A673 (cell line): ENCODE measurements at regions of chr6 and their contacts with region 1.

Region 1: GRCh38 chr6:53302678-53303360 is 45.9 kb downstream of the ELOVL5 start:
- DNase-seq: peak; percentile 70
- H3K4me3 ChIP-seq: peak overlapping the region; percentile 16
- H3K27ac ChIP-seq: no peak overlapping the region
- H3K4me1 ChIP-seq: peaks cover 22% of the 10 kb centered on the region
- H3K27me3 ChIP-seq: no peaks in the 10 kb centered on the region
- CTCF ChIP-seq: no peak

Region 2: DNA sequence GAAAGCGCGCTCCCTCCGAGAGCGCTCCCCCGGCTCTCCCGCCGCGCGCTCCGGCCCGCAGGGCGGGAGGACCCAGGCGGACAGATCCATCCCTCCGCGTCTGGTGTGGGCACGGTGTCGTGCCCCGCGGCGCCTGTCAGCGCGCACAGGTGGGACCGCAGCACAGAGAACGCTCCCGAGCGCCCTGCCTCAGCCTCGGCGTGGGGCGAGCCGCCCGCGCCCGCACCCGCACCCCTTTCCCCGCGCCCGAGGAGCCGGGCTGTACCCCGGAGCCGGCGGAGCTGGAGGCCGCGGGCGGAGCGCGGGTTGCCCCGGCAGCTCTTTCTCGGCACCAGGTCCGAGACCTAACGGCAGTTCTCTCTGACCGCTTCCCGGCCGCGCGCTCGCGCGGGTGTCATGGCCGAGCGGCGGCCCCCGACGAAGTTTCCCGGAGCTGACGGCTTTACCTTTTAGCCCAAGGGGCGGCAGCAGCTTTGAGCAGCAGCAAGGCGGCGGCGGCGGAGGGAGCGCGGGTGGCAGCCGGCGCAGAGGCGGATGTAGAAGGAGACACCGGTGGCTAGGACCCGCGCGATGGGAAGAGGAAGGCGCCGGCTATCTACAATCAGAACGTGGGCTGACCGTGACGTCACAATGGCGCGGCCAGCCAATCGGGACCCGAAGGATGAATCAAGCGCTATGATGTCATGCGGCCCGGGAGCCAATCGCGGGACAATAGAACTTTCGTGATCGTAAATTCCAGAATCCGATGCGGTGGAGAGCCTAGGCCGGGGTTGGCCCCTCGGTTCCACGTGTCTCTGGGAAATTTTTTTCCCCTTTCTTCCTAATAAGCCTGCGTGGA is 45.8 kb after region 1 on chr6 and contains the start of gene ELOVL5:
- CTCF ChIA-PET with region 1: no interaction called
- POLR2A ChIA-PET with region 1: no interaction called
- intact Hi-C with region 1: loop called (anchors 2 kb)
- DNase-seq: peak; percentile 98
- H3K4me3 ChIP-seq: peak within 1 kb of the TSS; percentile 92
- H3K27ac ChIP-seq: peak within 1 kb of the TSS; percentile 93
- H3K4me1 ChIP-seq: peaks cover 18% of the 10 kb centered on the region
- H3K27me3 ChIP-seq: no peaks in the 10 kb centered on the region
- CTCF ChIP-seq: no peak
- total RNA-seq, gene ELOVL5: 98.5 and 99.2 TPM in 2 replicates